B cell (primary cell): ENCODE measurements at regions of chr3 and their contacts with region 1.

Region 1: GRCh38 chr3:50350527-50351322 is at the starts of genes CYB561D2 and NPRL2:
- DNase-seq: peak; percentile 98
- ATAC-seq: peak; percentile 87
- H3K4me3 ChIP-seq: peak within 1 kb of the TSS; percentile 71 to 98 (median 91)
- H3K4me3 Mint-ChIP-seq: peak within 1 kb of the TSS; percentile 99
- H3K27ac ChIP-seq: peak within 1 kb of the TSS; percentile 85 to 93
- H3K27ac Mint-ChIP-seq: peak within 1 kb of the TSS; percentile 100
- H3K4me1 ChIP-seq: peaks cover 25 to 41% of the 10 kb centered on the region in 2 donors
- H3K4me1 Mint-ChIP-seq: peaks cover 52% of the 10 kb centered on the region
- H3K27me3 ChIP-seq: no peaks in the 10 kb centered on the region
- H3K27me3 Mint-ChIP-seq: no peaks in the 10 kb centered on the region
- CTCF ChIP-seq: no peak
- total RNA-seq, gene CYB561D2: 36.1 and 39.5 TPM in 2 replicates
- total RNA-seq, gene NPRL2: 29.6 and 31.3 TPM in 2 replicates

Region 2: DNA sequence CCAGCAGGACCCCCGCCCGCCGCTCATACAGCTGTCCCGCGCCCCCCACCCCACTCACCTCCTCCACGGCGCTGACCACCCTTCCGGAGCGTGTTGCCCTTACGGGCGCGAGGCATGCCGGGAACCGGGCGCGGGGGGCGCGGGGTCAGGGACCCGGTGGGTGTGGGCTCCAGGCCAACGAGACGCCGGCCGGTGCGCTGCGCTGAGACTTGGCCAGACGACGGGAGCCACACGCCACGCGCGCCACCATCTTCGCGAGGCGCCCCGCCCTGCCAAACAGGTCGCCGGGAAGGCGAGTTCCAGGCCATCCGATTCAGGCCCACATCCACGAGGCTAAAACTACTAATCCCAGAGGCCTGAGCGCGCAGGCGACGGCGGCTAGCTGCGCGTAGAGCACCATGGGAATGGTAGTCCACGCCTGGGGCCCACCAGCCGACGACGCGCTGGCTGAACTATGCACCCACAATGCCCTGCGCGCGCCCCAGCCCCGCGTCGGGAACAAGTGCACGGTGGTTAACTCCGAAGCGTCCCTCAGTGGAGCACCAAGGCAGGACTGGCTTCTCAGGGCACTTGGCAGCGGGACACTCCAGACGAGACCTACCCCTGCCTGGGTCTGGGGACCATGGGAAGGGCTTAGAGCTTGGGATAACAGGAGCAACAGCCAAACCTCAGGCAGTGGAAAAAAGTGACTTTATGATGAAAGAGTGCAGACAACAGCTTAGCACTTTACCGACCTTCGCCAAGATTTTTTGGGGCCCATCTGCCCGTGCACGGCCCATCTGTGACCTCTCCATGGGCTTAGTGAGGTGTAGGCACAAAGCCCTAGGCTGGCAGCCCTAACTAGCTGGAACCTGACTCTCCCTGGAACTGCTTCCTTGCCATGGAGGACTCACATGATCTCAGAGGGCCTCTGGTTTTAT is 58.3 kb before region 1 on chr3 and contains the start of gene IFRD2:
- CTCF ChIA-PET with region 1: interaction called, 5 read pairs
- POLR2A ChIA-PET with region 1: interaction called, 4 read pairs
- intact Hi-C with region 1: loop called (anchors 1 kb)
- DNase-seq: peak; percentile 97
- ATAC-seq: peak; percentile 99
- H3K4me3 ChIP-seq: peak within 1 kb of the TSS; percentile 56 to 94 (median 81)
- H3K4me3 Mint-ChIP-seq: peak within 1 kb of the TSS; percentile 92
- H3K27ac ChIP-seq: peak within 1 kb of the TSS; percentile 57 to 85
- H3K27ac Mint-ChIP-seq: peak within 1 kb of the TSS; percentile 96
- H3K4me1 ChIP-seq: peaks cover 11 to 17% of the 10 kb centered on the region in 2 donors
- H3K4me1 Mint-ChIP-seq: peaks cover 17% of the 10 kb centered on the region
- H3K27me3 ChIP-seq: no peaks in the 10 kb centered on the region
- H3K27me3 Mint-ChIP-seq: no peaks in the 10 kb centered on the region
- CTCF ChIP-seq: no peak
- total RNA-seq, gene IFRD2: 55.8 and 63.4 TPM in 2 replicates

Region 3: GRCh38 chr3:50327943-50328691 is 22.6 kb before region 1 on chr3 and contains the start of gene TUSC2:
- CTCF ChIA-PET with region 1: interaction called, 5 read pairs
- POLR2A ChIA-PET with region 1: interaction called, 10 read pairs
- intact Hi-C with region 1: loop called (anchors 1 kb)
- DNase-seq: peak; percentile 97
- ATAC-seq: peak; percentile 94
- H3K4me3 ChIP-seq: peak within 1 kb of the TSS; percentile 39 to 98 (median 87)
- H3K4me3 Mint-ChIP-seq: peak within 1 kb of the TSS; percentile 95
- H3K27ac ChIP-seq: peak within 1 kb of the TSS; percentile 66 to 90
- H3K27ac Mint-ChIP-seq: peak within 1 kb of the TSS; percentile 91
- H3K4me1 ChIP-seq: peaks cover 14 to 24% of the 10 kb centered on the region in 2 donors
- H3K4me1 Mint-ChIP-seq: peaks cover 25% of the 10 kb centered on the region
- H3K27me3 ChIP-seq: no peaks in the 10 kb centered on the region
- H3K27me3 Mint-ChIP-seq: no peaks in the 10 kb centered on the region
- CTCF ChIP-seq: no peak
- total RNA-seq, gene TUSC2: 25.5 and 28.2 TPM in 2 replicates

Region 4: GRCh38 chr3:50365080-50365841 is 14.5 kb after region 1 on chr3:
- CTCF ChIA-PET with region 1: interaction called, 27 read pairs
- POLR2A ChIA-PET with region 1: interaction called, 13 read pairs
- intact Hi-C with region 1: loop called (anchors 2 kb)
- DNase-seq: peak; percentile 95
- ATAC-seq: peak; percentile 97
- H3K4me3 ChIP-seq: peak overlapping the region; percentile 24 to 84 (median 81)
- H3K4me3 Mint-ChIP-seq: peak overlapping the region; percentile 91
- H3K27ac ChIP-seq: peak overlapping the region; percentile 78 to 86
- H3K27ac Mint-ChIP-seq: peak overlapping the region; percentile 94
- H3K4me1 ChIP-seq: peaks cover 13 to 22% of the 10 kb centered on the region in 2 donors
- H3K4me1 Mint-ChIP-seq: peaks cover 21% of the 10 kb centered on the region
- H3K27me3 ChIP-seq: peaks cover 0 to 3% (median 0%) of the 10 kb centered on the region in 4 experiments
- H3K27me3 Mint-ChIP-seq: peaks cover 4% of the 10 kb centered on the region
- CTCF ChIP-seq: no peak

Region 5: DNA sequence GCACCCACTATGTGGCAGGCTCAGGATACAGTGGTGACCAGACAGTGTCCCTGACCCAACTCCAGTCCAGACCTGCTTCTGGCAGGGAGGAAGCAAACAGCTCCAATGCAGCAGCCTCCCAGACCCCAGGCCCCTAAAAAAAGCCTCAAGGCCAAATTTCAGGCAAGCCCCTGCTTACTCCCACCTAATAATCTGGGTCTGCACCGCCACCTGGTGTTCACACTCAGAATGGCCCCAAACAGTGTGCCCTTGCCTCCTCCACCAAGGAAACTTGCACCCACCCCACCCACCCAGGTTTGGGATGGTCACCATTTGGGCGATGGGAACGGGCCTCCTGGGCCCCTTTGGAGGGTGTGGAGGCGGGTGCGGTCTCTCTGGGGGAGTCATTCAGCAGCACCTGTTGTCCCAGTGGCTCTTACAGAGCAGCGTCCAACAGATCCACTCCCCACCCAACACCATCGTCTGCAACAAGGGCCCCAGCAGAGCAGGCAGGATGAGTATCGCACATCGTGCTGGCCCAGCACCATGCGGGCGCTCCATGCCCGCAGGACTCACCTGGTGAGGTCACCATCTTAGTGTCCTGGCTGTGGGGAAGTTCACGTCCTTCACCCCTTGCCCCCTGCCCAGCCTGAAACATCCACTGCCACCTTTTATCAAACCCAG is 199.5 kb after region 1 on chr3:
- CTCF ChIA-PET with region 1: interaction called, 104 read pairs
- POLR2A ChIA-PET with region 1: no interaction called
- intact Hi-C with region 1: loop called (anchors 1 kb)
- DNase-seq: peak; percentile 70
- ATAC-seq: peak; percentile 68
- H3K4me3 ChIP-seq: no peak overlapping the region
- H3K4me3 Mint-ChIP-seq: no peak overlapping the region
- H3K27ac ChIP-seq: no peak overlapping the region
- H3K27ac Mint-ChIP-seq: no peak overlapping the region
- H3K4me1 ChIP-seq: no peaks in the 10 kb centered on the region
- H3K4me1 Mint-ChIP-seq: no peaks in the 10 kb centered on the region
- H3K27me3 ChIP-seq: peaks cover 0 to 3% (median 0%) of the 10 kb centered on the region in 4 experiments
- H3K27me3 Mint-ChIP-seq: no peaks in the 10 kb centered on the region
- CTCF ChIP-seq: peak; percentile 84